PC-9 (cell line): ENCODE measurements at regions of chrX and their contacts with region 1.

Region 1: DNA sequence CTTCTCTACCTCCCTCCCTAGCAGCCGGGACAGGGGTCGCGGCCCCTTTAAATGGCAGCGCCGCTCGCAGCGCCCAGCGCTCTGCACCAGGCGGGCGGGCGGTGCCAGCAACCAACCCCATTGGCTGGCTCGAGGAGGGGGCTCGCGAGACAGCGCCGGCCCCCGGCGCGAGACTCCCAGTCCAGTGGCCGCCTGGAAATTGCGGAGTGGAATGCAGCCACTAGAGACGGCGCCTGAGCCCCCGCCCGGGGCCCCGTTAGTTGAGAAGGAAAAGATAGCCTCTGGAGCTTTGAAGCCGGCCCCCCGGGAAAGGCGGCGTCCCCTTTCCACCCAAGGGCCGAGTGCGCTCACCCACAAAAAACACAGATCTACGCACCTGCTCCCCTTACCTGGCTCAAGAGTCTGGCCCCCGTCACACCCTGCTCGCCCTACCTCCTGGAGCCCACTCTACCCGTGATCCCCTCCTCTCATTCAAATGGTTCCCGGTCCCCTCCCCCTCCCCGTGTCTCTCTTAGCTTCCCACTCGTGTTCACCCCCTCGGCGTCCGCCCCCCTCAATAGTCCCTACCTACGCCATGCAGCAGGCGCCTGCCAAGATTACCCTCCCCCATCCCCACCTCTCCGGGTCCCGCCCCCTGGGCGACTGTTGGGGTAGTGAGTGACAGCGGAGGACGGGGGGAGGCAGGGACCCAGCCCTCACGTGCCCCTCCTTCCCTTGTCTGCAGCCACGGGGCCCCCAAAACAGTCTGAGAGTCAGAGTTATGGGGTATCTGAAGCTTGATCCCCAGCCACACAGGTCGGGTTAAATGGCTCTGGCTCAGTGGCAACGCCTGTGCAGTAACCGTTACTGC is at the start of gene ZMYM3:
- DNase-seq: peak; percentile 72 to 87
- H3K4me3 ChIP-seq: peak within 1 kb of the TSS; percentile 87
- H3K27ac ChIP-seq: no peak within 1 kb of the TSS
- H3K4me1 ChIP-seq: peaks cover 12% of the 10 kb centered on the region
- H3K27me3 ChIP-seq: no peaks in the 10 kb centered on the region
- CTCF ChIP-seq: no peak
- total RNA-seq, gene ZMYM3: 45.3 and 45.7 TPM in 2 replicates

Region 2: DNA sequence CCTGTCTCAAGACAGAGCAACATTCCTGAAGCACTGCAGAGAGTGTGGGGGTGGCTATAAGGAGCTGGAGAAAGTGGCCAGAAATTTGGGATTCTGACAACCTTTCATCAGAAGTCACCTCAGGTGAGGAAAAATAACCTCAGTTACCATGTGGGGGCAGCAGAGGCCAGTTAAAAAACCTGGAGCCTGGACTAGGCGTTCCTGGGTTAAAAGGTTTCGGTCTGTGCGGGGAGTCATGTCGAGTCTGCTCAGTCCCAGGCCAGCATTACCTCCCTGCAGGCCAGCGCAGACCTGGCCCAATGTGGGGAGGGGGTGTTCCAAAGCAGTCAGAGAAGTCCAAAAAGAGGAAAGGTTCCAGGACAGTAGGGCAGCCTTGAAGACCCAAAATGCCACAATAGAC is 1761.1 kb before region 1 on chrX:
- CTCF ChIA-PET with region 1: no interaction called
- POLR2A ChIA-PET with region 1: no interaction called
- intact Hi-C with region 1: no loop called
- DNase-seq: peak in 1 of 2 experiments; percentile 21
- H3K4me3 ChIP-seq: no peak overlapping the region
- H3K27ac ChIP-seq: no peak overlapping the region
- H3K4me1 ChIP-seq: no peaks in the 10 kb centered on the region
- H3K27me3 ChIP-seq: no peaks in the 10 kb centered on the region
- CTCF ChIP-seq: peak; percentile 65

Region 3: DNA sequence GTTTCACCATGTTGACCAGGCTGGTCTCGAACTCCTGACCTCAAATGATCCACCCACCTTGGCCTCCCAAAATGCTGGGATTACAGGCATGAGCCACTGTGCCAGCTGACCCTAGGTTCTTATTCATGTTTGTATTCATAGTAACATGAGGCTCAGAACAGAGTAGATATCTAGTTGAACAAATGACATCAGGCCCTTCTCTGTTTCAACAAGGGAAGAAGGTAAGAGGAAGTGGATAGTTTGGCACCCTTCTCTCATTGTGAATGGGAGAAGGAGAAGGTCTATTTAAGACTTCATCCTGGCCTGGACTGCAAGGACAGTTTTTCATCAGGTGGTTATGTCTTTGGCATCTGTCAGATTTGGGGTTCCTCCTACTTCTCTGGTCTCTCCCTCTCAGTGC is 17.5 kb before region 1 on chrX:
- CTCF ChIA-PET with region 1: no interaction called
- POLR2A ChIA-PET with region 1: no interaction called
- intact Hi-C with region 1: no loop called
- DNase-seq: no peak
- H3K4me3 ChIP-seq: no peak overlapping the region
- H3K27ac ChIP-seq: no peak overlapping the region
- H3K4me1 ChIP-seq: no peaks in the 10 kb centered on the region
- H3K27me3 ChIP-seq: no peaks in the 10 kb centered on the region
- CTCF ChIP-seq: no peak

Region 4: DNA sequence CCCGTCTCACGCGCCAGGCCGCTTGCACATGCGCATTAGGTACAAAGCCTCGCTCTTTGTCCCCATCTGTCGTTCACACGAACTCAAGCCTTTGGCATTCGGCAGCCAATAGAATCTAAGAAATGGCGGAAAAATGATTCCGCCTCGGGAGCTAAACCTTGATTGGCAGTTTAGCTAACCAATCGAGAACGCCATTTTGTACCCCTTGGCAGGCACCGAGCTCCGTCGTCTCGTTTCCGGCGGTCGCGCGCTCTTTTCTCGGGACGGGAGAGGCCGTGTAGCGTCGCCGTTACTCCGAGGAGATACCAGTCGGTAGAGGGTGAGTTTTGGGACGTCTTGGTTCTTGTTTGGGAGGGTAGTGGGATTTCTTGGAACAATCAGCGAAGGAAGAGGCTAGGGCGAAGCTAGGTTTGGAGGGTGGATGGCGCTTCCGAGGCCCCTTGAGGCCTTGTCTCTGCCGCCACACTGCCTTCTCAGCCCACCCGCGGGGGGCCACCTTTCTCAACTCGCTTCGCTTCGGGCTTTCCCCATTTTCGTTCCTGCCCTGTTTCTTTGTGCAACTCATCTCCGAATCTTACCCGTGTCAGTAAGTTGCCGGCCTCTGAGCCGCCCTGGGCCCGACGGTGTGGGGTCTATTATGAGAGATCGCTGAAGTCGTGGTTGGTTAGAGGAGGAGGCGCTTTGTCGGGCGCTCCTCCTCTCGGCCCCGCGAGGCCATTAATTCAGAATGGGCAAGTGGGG is 29.3 kb after region 1 on chrX and contains the start of gene NONO:
- CTCF ChIA-PET with region 1: no interaction called
- POLR2A ChIA-PET with region 1: no interaction called
- intact Hi-C with region 1: loop called (anchors 2 kb)
- DNase-seq: peak; percentile 83 to 97
- H3K4me3 ChIP-seq: peak within 1 kb of the TSS; percentile 77
- H3K27ac ChIP-seq: peak within 1 kb of the TSS; percentile 79
- H3K4me1 ChIP-seq: peaks cover 17% of the 10 kb centered on the region
- H3K27me3 ChIP-seq: no peaks in the 10 kb centered on the region
- CTCF ChIP-seq: no peak
- total RNA-seq, gene NONO: 499 and 551 TPM in 2 replicates